Activated CD8-positive, alpha-beta T cell treated with anti-CD3 and anti-CD28 coated beads, Interleukin-2, amount 10 ng/mL, durations not matched to agents 7 days and 5 days (primary cell): ENCODE measurements at regions of chr1 and their contacts with region 1.

Region 1: GRCh38 chr1:92749024-92749634 is 35.8 kb downstream of the EVI5 start:
- DNase-seq: peak; percentile 55
- ATAC-seq: no peak
- H3K4me3 Mint-ChIP-seq: no peak overlapping the region
- H3K27ac Mint-ChIP-seq: no peak overlapping the region
- H3K4me1 Mint-ChIP-seq: no peaks in the 10 kb centered on the region
- H3K27me3 Mint-ChIP-seq: peaks cover 7% of the 10 kb centered on the region

Region 2: GRCh38 chr1:92691925-92692324 is 57.2 kb before region 1 on chr1:
- CTCF ChIA-PET with region 1: no interaction called
- POLR2A ChIA-PET with region 1: no interaction called
- DNase-seq: no peak
- ATAC-seq: no peak
- H3K4me3 Mint-ChIP-seq: no peak overlapping the region
- H3K27ac Mint-ChIP-seq: no peak overlapping the region
- H3K4me1 Mint-ChIP-seq: peaks cover 5% of the 10 kb centered on the region
- H3K27me3 Mint-ChIP-seq: peaks cover 8% of the 10 kb centered on the region

Region 3: DNA sequence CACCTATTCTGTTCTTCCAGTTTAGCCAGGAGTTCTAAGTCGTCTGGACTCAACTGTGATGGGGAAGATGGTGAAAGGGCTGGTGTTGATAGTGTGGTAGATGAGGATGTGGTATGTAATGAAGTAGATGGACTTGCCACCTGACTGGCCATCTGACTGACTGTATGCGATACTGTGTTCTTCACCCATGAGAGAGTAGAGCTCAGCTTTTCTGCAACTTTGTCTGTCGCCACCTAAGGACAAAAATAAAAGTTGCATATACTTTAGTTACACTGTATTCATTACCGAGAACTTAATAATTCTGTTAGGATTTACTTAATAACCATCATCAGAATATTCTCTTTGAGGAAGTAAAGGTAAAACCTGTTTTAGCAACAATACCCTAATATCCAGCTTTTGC is 12.7 kb before region 1 on chr1:
- CTCF ChIA-PET with region 1: interaction called, 12 read pairs
- POLR2A ChIA-PET with region 1: no interaction called
- DNase-seq: no peak
- ATAC-seq: no peak
- H3K4me3 Mint-ChIP-seq: no peak overlapping the region
- H3K27ac Mint-ChIP-seq: no peak overlapping the region
- H3K4me1 Mint-ChIP-seq: no peaks in the 10 kb centered on the region
- H3K27me3 Mint-ChIP-seq: peaks cover 30% of the 10 kb centered on the region

Region 4: DNA sequence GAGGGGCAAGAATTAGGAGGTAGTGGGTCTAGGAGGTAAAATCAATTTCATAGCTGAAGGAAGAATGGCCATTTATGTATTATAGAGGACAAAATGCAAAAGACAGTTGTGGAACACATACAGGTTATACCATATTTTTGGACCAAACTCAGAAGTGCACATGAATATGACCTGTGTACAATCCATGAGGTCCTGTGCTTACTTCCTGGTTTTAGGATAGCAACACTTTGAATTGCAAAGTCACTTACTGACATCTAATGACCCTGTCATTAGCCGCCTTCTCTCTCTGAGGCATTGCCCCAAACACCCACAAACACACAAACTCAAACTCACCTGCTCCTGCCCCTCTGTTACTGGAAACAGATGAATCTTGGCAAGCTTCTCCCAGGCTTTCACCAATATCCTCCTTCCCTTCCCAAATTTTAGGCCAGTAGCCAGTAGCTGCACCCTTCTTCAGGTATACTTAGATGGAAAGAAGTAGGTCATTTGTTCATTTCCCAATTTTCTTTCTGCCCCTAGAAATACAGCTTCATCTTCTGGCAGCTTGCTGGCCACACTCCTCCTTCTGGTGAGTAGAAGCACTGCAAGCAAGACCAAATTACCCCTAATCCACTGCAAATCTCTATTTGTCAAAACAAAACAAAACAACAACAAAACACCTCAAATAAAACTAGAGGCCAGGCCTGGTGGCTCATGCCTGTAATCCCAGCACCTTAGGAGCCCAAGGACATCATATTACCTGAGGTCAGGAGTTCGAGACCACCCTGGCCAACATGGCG is 69.0 kb after region 1 on chr1:
- CTCF ChIA-PET with region 1: interaction called, 91 read pairs
- POLR2A ChIA-PET with region 1: no interaction called
- DNase-seq: peak; percentile 33
- ATAC-seq: peak; percentile 47
- H3K4me3 Mint-ChIP-seq: no peak overlapping the region
- H3K27ac Mint-ChIP-seq: no peak overlapping the region
- H3K4me1 Mint-ChIP-seq: no peaks in the 10 kb centered on the region
- H3K27me3 Mint-ChIP-seq: peaks cover 25% of the 10 kb centered on the region